ENCODE measurements at regions of chr9 and their contacts with region 1.

Region 1: DNA sequence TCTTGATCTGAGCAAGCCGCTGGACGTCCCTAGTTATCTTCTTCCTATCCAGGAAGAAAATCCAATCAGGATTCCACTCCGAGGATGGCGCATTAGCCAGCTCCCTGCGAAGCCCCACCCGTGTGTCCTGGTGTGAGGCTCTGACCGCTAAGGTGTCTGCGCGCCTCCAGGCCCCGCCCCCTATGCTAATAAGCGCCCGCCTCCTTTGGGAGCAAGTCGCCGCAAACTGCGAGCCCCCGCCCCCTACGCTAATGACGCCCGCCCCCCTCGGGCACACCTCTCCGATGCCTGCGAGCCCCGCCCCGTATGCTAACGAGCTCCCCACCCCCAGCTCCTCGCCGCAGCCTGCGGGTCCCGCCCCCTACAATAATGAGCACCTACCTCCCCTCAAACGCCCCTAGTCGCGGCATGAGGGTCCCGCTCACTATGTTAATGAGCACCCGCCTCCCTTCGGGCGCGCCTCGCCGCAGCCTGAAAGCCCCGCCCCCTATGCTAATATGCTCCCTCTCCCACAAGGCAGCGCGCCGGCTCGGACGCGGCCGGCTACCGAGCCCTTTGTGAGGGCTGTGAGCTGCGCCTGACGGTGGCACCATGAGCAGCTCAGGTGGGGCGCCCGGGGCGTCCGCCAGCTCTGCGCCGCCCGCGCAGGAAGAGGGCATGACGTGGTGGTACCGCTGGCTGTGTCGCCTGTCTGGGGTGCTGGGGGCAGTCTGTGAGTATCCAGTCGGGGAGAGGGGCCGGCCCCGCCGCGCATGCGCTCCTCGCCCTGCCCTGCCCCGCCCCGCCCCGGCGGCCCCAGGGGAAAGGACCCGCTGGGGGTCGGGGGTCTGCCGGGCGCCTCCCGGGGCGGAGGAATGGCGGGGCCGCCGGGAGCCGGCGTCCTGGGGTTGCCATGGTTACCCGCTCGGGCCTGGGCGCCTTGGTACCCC is at the start of gene CACFD1:
- DNase-seq: peak; percentile 92 to 99 (median 97)

Region 2: GRCh38 chr9:133252301-133252780 is 207.4 kb before region 1 on chr9:
- intact Hi-C with region 1: no loop called
- DNase-seq: no peak

Region 3: GRCh38 chr9:133417541-133418461 is 41.9 kb before region 1 on chr9 and contains the start of gene REXO4:
- intact Hi-C with region 1: loop called (anchors 5 kb)
- DNase-seq: peak; percentile 59 to 93 (median 82)

Measured in head of caudate nucleus (tissue), 42 donors.